ENCODE measurements at regions of chr15 and their contacts with region 1.

Region 1: DNA sequence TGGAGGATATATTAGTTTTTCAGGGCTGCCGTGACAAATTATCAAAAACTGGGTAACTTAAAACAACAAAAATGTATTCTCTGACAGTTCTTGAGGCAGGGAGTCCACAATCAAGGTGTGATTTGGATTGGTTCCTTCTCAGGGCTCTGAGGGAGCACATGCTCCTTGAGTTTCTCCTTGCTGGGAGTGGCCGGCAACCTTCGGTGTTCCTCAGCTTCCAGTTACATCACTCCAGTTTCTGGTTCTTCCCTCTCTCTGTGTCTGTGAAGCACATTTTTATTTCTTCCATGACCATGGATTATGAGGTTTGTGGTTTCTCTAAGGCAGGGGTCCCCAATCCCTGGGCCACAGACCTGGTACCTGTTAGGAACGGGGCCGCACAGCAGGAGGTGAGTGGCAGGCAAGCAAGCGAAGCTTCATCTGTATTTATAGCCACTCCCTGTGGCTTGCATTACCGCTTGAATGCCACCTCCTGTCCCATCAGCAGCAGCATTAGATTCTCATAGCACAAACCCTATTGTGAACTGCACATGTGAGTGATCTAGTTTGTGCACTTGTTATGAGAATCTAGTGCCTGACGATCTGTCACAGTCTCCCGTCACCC is 24.3 kb downstream of the LRRC28 start:
- DNase-seq: no peak
- ATAC-seq: no peak
- H3K4me3 ChIP-seq: no peak overlapping the region
- H3K27ac ChIP-seq: no peak overlapping the region
- H3K4me1 ChIP-seq: no peaks in the 10 kb centered on the region
- H3K27me3 ChIP-seq: no peaks in the 10 kb centered on the region
- CTCF ChIP-seq: no peak
- POLR2A ChIP-seq: no peak
- RAD21 ChIP-seq: no peak

Region 2: DNA sequence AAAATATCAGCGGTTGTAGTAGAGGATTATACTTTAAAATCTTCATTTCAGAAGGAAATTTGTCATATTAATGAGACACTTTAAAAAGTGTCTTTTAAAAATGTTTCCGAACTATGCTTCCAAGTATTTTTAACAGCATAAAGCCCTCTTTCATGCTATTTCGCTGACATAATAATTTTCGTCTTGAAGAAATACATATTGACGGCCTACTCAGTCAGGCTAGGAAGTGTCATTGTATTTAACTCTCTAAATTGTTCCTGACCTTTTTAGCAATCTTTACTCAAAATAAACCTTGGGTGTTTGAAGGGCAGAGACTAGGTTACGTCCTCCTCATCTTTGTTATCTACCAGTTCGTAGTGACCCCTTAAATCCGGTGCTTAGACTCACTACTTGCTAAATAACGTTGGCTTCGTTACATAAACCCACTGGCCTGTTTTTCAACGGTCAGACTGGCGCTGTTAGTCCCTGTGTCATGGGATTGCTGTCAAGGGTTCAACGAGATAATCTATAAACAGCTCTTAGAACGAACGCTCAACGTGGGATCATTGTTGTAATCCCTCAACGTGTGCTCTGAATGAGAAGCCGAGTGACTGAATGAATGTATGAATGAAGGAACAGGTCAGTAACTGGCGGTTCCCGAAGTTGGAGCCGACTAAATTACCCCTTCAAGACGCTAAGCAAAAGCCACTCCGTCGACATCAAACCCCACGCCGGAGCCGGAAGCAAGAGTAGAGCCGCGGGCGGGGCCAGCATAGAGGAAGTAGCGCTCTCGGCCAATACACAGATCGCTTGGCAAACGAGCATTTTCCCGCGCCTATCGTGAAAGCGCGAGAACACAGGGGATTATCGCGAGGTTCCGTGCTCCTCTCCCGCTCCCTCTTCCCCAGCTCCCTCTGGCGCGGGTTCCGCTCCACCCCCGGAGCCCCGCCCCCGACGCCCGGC is 24.9 kb before region 1 on chr15:
- CTCF ChIA-PET with region 1: interaction called, 10 read pairs
- POLR2A ChIA-PET with region 1: interaction called, 3 read pairs
- RAD21 ChIA-PET with region 1: no interaction called
- intact Hi-C with region 1: no loop called
- DNase-seq: peak; percentile 97
- ATAC-seq: peak; percentile 97
- H3K4me3 ChIP-seq: peak overlapping the region; percentile 77 to 83
- H3K27ac ChIP-seq: peak overlapping the region; percentile 70
- H3K4me1 ChIP-seq: peaks cover 11 to 27% of the 10 kb centered on the region in 2 experiments; a peak in 3 of 4 replicates
- H3K27me3 ChIP-seq: no peaks in the 10 kb centered on the region
- CTCF ChIP-seq: no peak
- POLR2A ChIP-seq: no peak
- RAD21 ChIP-seq: no peak

Region 3: DNA sequence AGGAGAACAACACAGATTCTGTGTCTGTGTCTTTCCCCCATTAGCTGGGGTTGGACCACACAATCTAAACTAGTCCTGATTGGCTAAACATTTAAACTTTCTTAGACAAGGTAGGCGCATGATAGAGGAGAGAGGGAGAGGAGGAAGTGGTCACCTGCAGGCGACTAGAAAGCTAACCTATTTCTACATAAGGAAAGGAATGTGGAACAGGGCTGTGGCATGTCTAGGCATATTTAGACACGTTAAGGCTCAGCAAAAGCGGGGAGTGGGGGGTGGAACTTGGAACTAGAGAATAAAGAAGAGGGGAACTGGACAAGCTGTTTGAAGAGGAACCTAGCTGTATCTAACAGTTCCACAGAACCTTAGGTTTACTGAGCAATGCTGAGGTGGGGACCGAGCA is 11.5 kb before region 1 on chr15:
- CTCF ChIA-PET with region 1: interaction called, 19 read pairs
- POLR2A ChIA-PET with region 1: no interaction called
- RAD21 ChIA-PET with region 1: no interaction called
- intact Hi-C with region 1: no loop called
- DNase-seq: no peak
- ATAC-seq: no peak
- H3K4me3 ChIP-seq: no peak overlapping the region
- H3K27ac ChIP-seq: no peak overlapping the region
- H3K4me1 ChIP-seq: no peaks in the 10 kb centered on the region
- H3K27me3 ChIP-seq: no peaks in the 10 kb centered on the region
- CTCF ChIP-seq: no peak
- POLR2A ChIP-seq: no peak
- RAD21 ChIP-seq: no peak

Region 4: GRCh38 chr15:99909592-99910295 is 634.1 kb after region 1 on chr15:
- CTCF ChIA-PET with region 1: interaction called, 4 read pairs
- POLR2A ChIA-PET with region 1: no interaction called
- RAD21 ChIA-PET with region 1: no interaction called
- intact Hi-C with region 1: loop called (anchors 1 kb)
- DNase-seq: peak; percentile 38
- ATAC-seq: peak; percentile 93
- H3K4me3 ChIP-seq: no peak overlapping the region
- H3K27ac ChIP-seq: no peak overlapping the region
- H3K4me1 ChIP-seq: no peaks in the 10 kb centered on the region
- H3K27me3 ChIP-seq: no peaks in the 10 kb centered on the region
- CTCF ChIP-seq: peak; percentile 40 to 59 (median 57); a peak in 5 of 6 replicates
- POLR2A ChIP-seq: no peak
- RAD21 ChIP-seq: peak; percentile 69